Activated T-helper 1 cell treated with anti-CD3 and anti-CD28 coated beads, Interleukin-12 subunit alpha, Interleukin-12 subunit beta, Interleukin-2, Interleukin-4 antibody, amounts not matched to agents 30 ng/mL and 10 ng/mL and 1 ng/mL, durations not matched to agents 14 hours and 24 hours and 36 hours (primary cell): ENCODE measurements at regions of chr15 and their contacts with region 1.

Region 1: DNA sequence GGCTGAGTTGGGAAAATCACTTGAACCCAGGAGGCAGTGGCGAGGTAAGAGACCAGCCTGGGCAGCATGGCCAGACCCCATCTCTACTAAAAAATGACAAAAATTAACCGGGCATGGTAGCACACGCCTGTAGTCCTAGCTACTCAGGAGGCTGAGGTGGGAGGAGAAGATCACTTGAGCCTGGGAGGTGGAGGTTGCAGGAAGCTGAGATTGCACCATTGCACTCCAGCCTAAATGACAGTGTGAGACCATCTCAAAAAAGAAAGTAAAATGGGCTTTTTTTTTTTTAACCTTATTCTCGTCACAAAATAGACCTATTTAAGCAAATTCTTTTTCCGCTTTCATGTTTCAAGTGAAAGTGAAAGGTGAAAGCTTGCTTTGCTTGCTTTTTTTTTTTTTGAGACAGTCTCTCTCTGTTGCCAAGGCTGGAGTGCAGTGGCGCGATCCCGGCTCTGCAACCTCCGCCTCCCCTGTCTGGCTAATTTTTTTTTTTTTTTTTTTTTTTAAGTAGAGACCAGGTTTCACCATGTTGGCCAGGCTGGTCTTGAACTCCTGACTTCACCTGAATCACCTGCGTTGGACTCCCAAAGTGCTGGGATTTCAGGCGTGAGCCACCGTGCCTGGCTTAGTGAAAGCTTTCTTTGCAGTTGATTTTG is 3.6 kb downstream of the PDIA3 start:
- DNase-seq: peak; percentile 49
- H3K4me3 Mint-ChIP-seq: peak overlapping the region; percentile 66
- H3K27ac Mint-ChIP-seq: peak overlapping the region; percentile 78
- H3K4me1 Mint-ChIP-seq: peaks cover 39% of the 10 kb centered on the region
- H3K27me3 Mint-ChIP-seq: no peaks in the 10 kb centered on the region

Region 2: DNA sequence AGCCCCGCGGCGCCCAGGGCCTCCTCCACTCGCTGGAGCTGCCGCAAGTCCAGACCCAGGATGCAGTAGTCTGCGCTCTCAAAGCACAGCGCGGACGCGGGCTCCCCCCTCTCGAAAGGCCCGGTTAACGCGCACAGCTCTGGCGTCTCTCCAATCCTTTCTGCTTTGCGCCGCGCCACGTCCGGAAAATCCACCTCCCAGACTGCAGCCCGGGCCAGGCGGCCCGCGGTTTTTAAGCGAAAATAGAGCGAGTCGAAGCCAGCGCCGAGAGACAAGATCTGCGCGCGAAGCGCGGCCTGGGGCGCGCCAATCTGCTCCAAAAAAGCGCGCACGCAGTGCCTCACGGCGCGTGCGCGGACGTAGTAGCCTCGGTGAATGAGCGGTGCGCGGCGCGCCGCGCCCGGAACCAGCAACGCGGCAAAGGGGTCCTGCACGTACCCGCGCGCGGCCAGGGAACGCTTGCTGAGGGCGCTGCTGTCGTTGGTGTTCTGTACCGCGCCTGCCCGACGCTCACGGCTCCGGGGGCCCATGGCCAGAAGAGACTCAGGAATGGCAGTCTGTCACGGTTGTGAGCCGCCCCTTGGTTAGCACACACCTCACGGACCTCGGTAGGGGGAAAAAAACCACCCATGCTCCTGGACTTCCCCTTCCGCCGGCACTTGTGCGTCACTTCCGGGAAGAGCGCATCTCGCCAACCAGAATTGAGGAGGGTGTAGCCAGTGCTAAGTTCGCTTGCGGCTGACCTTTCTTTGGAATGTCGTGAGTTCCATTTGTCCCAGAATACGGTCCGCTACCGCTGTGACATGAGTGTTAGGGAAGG is 419.6 kb before region 1 on chr15 and contains the start of gene LCMT2:
- intact Hi-C with region 1: loop called (anchors 2 kb)
- DNase-seq: peak; percentile 86
- H3K4me3 Mint-ChIP-seq: peak within 1 kb of the TSS; percentile 87
- H3K27ac Mint-ChIP-seq: peak within 1 kb of the TSS; percentile 94
- H3K4me1 Mint-ChIP-seq: peaks cover 40% of the 10 kb centered on the region
- H3K27me3 Mint-ChIP-seq: no peaks in the 10 kb centered on the region
- total RNA-seq, gene LCMT2: 15.4 and 15.7 TPM in 2 replicates

Region 3: DNA sequence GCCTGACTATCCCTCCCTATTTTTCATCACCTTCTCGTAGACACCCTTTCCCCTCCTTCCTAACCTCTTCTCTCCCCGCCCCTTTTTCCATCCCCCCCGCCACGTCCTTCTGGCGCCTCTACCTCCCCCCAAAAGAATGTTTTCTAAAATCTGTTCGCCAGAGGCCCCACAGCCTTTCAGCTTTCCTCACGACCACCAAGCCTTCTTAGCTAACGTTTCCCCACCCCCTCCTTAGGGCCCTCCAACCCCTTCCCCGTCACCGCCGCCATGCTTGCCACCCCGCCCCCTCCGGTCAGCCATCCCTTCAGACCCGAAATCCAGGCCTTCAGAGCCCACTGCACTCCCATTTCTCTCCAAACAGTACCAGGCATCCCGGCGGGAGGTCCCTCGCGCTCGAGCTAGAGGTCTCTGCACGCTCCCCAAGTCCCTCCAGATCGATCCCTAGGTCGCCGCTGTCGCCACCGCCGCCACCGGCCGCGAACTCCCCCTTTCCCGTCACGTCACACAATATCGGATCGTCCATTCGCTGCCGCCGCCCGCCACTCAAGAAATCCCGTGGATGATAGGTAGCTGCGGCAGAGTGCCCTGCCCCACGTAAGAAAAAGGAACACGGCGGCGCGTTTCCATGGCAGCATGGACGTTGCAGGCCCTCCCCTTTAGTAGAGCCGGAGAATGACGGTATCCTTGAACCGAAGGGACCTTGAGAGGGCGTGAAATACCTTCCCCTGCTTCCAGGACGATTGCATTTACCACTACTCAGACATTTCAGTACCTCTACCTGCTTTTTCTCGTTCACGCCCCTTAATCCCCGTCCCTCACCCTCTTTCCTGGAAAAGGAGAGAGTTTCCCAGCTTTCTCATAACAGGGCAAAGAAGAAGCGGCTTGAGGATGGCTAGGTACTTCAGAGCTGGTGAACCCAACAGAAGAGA is 256.9 kb before region 1 on chr15 and contains the start of gene TP53BP1:
- intact Hi-C with region 1: loop called (anchors 2 kb)
- DNase-seq: peak; percentile 93
- H3K4me3 Mint-ChIP-seq: peak within 1 kb of the TSS; percentile 93
- H3K27ac Mint-ChIP-seq: peak within 1 kb of the TSS; percentile 97
- H3K4me1 Mint-ChIP-seq: peaks cover 26% of the 10 kb centered on the region
- H3K27me3 Mint-ChIP-seq: no peaks in the 10 kb centered on the region
- total RNA-seq, gene TP53BP1: 44.1 and 46.1 TPM in 2 replicates

Region 4: DNA sequence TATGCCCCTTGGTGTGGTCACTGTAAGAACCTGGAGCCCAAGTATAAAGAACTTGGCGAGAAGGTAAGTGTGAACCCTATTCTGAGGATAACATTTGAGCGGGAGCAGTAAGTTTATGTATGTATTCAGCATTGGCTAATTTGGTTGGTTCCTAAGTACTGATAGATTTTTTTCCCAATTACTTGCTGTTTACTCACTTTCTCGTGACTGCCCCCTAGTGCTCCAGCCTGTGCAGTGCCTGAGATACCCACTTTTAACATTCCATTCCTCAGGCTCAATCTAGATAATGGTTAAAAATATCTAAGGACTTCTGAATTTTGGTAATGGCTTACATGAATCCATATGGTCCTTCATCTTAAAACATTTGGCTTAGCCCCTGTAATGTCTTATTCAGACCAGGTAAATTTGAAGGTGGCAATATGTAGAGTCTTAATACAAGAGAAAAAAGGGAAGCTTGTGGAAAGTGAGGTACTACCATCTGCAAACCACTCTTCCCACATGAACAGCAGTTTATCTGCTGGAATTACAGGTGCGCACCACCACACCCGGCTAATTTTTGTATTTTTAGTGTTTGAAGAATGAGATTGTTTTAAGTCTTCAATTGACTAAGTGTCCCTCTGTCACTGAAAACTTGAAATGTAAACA is 19.9 kb after region 1 on chr15:
- intact Hi-C with region 1: loop called (anchors 2 kb)
- DNase-seq: peak; percentile 36
- H3K4me3 Mint-ChIP-seq: no peak overlapping the region
- H3K27ac Mint-ChIP-seq: no peak overlapping the region
- H3K4me1 Mint-ChIP-seq: peaks cover 8% of the 10 kb centered on the region
- H3K27me3 Mint-ChIP-seq: no peaks in the 10 kb centered on the region

Region 5: DNA sequence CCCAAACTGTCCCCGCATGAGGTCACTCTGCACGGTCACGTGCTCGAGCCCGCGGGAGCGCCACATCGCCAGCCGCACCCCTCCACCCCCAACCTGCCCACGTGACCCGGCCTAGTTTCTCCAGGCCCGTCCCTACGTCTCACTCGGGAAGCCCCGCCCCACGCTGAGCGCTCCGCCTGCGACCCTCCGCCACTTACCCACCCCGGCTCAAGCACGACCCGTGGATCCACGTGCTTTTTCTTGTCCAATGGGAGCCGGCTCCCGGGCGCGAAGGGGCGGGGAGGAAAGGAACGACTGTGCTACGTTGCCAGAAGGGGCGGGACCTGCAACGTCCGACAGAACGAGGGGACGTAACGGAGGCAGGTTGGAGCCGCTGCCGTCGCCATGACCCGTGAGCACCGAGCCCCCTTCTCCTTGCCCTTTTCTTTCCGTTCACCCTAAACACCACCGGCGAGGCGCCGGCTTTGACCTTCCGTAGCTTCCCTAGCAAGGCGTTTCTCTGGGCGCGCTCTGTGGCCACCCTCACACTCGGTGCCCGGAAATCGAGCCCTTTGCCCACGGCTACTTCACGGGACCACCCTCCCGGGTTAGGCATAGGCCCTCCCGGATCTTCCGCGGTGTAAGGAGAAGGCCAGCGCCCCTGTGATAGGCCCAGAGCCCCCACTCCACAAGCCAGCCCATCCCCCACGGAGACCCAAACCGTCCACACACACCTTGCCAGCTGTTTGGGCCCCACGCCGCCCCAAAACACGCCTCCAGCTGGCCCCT is 42.4 kb after region 1 on chr15 and contains the start of gene SERF2:
- intact Hi-C with region 1: loop called (anchors 1 kb)
- DNase-seq: peak; percentile 99
- H3K4me3 Mint-ChIP-seq: peak within 1 kb of the TSS; percentile 97
- H3K27ac Mint-ChIP-seq: peak within 1 kb of the TSS; percentile 94
- H3K4me1 Mint-ChIP-seq: peaks cover 43% of the 10 kb centered on the region
- H3K27me3 Mint-ChIP-seq: no peaks in the 10 kb centered on the region
- total RNA-seq, gene SERF2: 531 and 540 TPM in 2 replicates

Region 6: GRCh38 chr15:43824302-43825246 is 74.8 kb after region 1 on chr15 and contains the start of gene MFAP1:
- intact Hi-C with region 1: loop called (anchors 1 kb)
- DNase-seq: peak; percentile 91
- H3K4me3 Mint-ChIP-seq: peak within 1 kb of the TSS; percentile 97
- H3K27ac Mint-ChIP-seq: peak within 1 kb of the TSS; percentile 97
- H3K4me1 Mint-ChIP-seq: peaks cover 46% of the 10 kb centered on the region
- H3K27me3 Mint-ChIP-seq: no peaks in the 10 kb centered on the region
- total RNA-seq, gene MFAP1: 46.4 and 46.6 TPM in 2 replicates